ENCODE measurements at regions of chr7 and their contacts with region 1.

Region 1: DNA sequence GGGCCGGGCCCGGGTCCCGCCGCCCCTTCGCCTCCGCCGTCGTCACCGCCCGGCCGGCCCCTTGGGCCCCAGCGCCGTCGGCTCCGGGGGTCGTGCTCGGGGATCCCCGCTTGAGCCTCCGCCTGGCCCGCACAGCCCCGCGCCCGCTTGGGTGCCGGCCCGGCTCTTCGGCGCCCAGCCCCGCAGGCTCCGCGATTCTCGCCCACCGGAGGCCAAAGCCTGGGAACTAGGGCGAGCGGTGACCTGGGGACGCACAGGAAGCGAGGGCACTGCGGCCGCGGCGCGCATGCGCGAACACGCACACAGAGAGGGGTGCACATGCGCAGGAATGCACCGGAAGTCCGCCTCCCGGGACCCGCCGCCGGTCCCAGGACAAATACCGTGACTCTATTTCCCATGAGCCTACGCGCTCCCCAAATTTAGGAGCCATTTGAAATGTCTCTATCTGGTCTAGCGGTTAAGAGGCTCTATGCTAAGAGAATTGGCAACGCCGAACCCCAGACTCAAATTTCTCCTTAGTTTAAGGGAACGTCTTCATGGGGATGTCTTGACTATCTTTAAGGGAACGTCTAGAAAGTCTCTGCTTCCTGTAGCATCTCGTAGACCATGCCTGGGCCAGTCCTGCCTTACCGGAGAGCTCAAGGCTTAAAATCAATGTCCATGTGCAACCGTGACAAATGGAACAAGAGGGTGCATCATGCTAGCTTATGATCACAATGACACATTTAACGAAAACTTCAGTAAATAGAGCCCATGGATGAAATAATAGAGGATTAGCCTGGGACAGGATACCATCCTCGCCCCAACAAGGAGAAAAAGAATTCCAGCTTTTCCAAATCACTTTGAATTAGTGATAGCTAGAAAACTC is at the start of gene ZNF12:
- DNase-seq: peak; percentile 96
- ATAC-seq: peak; percentile 90
- H3K4me3 Mint-ChIP-seq: peak within 1 kb of the TSS; percentile 90
- H3K27ac Mint-ChIP-seq: peak within 1 kb of the TSS; percentile 84
- H3K4me1 Mint-ChIP-seq: peaks cover 41% of the 10 kb centered on the region
- H3K27me3 Mint-ChIP-seq: peaks cover 3% of the 10 kb centered on the region
- CTCF ChIP-seq: no peak
- total RNA-seq, gene ZNF12: 31.3 and 35.6 TPM in 2 replicates

Region 2: DNA sequence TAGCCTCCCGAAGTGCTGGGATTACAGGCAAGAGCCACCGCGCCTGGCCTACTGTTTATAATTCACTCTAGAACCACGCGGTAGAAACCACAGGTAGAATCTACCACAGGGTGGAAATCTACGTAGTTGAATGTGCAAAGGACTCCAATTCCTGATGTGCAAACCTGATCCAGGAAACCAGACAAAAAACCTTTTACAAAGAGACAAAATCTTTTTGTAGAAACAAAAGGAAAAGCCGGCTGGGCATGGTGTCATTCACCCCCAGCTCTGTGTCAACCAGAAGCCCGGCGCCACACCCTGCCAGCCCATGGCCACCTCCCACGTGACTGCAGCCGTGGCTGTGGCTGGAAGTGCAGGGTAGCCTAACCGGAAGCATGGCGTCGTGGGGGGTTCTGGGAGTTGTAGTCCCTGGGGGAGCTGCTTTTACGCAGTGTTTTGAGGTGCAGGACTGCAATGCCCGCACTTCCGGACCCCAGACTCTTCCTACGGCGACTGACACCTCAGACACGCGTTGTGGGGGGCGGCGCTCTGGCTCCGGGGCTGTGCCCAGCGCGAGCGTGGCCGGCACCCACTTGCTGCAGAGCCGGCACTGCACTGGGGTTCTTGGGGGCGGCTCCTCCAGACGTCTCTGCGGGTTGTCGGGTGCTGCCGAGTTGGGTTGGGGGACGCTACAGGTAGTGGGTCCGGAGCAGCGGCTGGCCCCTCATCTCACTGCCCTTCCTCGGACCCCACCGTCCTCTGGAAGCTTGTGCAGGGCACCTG is 884.0 kb before region 1 on chr7:
- CTCF ChIA-PET with region 1: no interaction called
- POLR2A ChIA-PET with region 1: no interaction called
- intact Hi-C with region 1: loop called (anchors 10 kb)
- DNase-seq: peak; percentile 84
- ATAC-seq: peak; percentile 99
- H3K4me3 Mint-ChIP-seq: peak overlapping the region; percentile 89
- H3K27ac Mint-ChIP-seq: peak overlapping the region; percentile 89
- H3K4me1 Mint-ChIP-seq: peaks cover 27% of the 10 kb centered on the region
- H3K27me3 Mint-ChIP-seq: no peaks in the 10 kb centered on the region
- CTCF ChIP-seq: no peak

Region 3: GRCh38 chr7:6589829-6590644 is 116.9 kb before region 1 on chr7 and contains the start of gene INTS15:
- CTCF ChIA-PET with region 1: no interaction called
- POLR2A ChIA-PET with region 1: no interaction called
- intact Hi-C with region 1: loop called (anchors 10 kb)
- DNase-seq: peak; percentile 93
- ATAC-seq: peak; percentile 90
- H3K4me3 Mint-ChIP-seq: peak within 1 kb of the TSS; percentile 89
- H3K27ac Mint-ChIP-seq: peak within 1 kb of the TSS; percentile 80
- H3K4me1 Mint-ChIP-seq: peaks cover 21% of the 10 kb centered on the region
- H3K27me3 Mint-ChIP-seq: no peaks in the 10 kb centered on the region
- CTCF ChIP-seq: no peak
- total RNA-seq, gene INTS15: 49.0 and 49.9 TPM in 2 replicates

Region 4: GRCh38 chr7:6658618-6659341 is 48.1 kb before region 1 on chr7:
- CTCF ChIA-PET with region 1: no interaction called
- POLR2A ChIA-PET with region 1: interaction called, 13 read pairs
- intact Hi-C with region 1: no loop called
- DNase-seq: no peak
- ATAC-seq: no peak
- H3K4me3 Mint-ChIP-seq: no peak overlapping the region
- H3K27ac Mint-ChIP-seq: no peak overlapping the region
- H3K4me1 Mint-ChIP-seq: no peaks in the 10 kb centered on the region
- H3K27me3 Mint-ChIP-seq: peaks cover 9% of the 10 kb centered on the region
- CTCF ChIP-seq: no peak

Region 5: DNA sequence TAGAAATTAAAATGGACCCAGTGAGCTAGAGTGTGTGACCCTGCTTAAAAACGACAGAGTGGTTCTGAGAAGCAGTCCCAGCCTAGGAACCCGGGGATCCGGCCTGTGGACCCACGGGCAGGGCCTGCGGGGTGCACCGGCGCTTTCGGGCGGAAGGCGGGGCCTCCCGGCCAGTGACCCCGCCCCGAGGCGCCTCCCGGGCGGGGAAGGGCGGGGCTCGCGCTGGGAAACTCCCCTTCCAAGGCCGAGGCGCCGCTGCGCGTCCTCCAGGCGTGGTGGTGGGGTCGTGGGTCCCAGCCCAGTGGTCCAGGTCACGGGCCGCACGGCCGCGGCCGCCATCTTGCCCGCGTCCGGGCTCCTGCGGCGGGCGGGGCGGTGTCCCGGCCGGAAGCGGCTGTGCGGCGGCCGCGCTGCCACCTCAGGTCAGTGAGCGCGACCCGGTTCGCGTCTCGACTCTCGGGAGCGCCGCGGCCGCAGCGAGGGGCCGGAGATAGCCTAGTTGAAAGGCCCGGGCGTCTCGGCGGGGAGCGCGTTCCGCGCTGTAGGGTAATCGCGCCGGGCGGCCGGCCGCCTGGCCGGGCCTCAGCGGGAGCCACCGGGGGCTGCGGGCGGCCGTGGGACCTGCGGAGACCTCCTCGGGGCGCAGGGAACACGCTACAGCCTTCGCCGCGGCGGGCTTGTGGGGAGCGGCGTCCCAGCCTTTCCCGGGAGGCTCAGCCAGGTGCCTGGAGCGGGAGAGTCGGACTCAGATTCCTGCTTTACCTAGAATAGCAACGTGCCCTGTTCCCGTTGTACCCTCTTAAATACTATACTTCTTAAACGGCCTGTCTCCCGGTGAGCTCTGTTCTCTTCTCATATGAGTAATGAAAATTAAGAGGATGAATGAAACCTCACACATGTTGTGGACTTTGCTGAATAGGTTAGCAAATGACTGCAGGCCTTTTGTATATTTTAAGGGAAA is 860.0 kb after region 1 on chr7 and contains the start of gene MIOS:
- CTCF ChIA-PET with region 1: no interaction called
- POLR2A ChIA-PET with region 1: no interaction called
- intact Hi-C with region 1: loop called (anchors 5 kb)
- DNase-seq: peak; percentile 85
- ATAC-seq: peak; percentile 83
- H3K4me3 Mint-ChIP-seq: peak within 1 kb of the TSS; percentile 85
- H3K27ac Mint-ChIP-seq: peak within 1 kb of the TSS; percentile 90
- H3K4me1 Mint-ChIP-seq: peaks cover 35% of the 10 kb centered on the region
- H3K27me3 Mint-ChIP-seq: no peaks in the 10 kb centered on the region
- CTCF ChIP-seq: no peak
- total RNA-seq, gene MIOS: 70.2 and 81.3 TPM in 2 replicates